ENCODE measurements at regions of chr21 and their contacts with region 1.

Region 1: GRCh38 chr21:26148079-26148839 is 22.3 kb downstream of the APP start:
- DNase-seq: no peak
- H3K4me3 ChIP-seq: no peak overlapping the region
- H3K27ac ChIP-seq: peak overlapping the region; percentile 76 to 79
- H3K4me1 ChIP-seq: peaks cover 6 to 25% of the 10 kb centered on the region in 2 donors
- H3K27me3 ChIP-seq: no peaks in the 10 kb centered on the region
- CTCF ChIP-seq: no peak

Region 2: GRCh38 chr21:26112127-26112742 is 36.0 kb before region 1 on chr21:
- intact Hi-C with region 1: loop called (anchors 5 kb)
- DNase-seq: peak in 1 of 2 donors; percentile 69
- H3K4me3 ChIP-seq: no peak overlapping the region
- H3K27ac ChIP-seq: peak overlapping the region in 1 of 2 donors; percentile 53
- H3K4me1 ChIP-seq: peaks cover 4 to 14% of the 10 kb centered on the region in 2 donors
- H3K27me3 ChIP-seq: no peaks in the 10 kb centered on the region
- CTCF ChIP-seq: no peak